Activated naive CD8-positive, alpha-beta T cell treated with anti-CD3 and anti-CD28 coated beads, Interleukin-2, amount 10 ng/mL, durations not matched to agents 7 days and 5 days (primary cell): ENCODE measurements at regions of chr6 and their contacts with region 1.

Region 1: GRCh38 chr6:30616811-30617564 is at the start of gene PPP1R10:
- DNase-seq: peak; percentile 97
- ATAC-seq: peak; percentile 73
- H3K4me3 Mint-ChIP-seq: peak within 1 kb of the TSS; percentile 95
- H3K27ac Mint-ChIP-seq: peak within 1 kb of the TSS; percentile 98
- H3K4me1 Mint-ChIP-seq: peaks cover 32% of the 10 kb centered on the region
- H3K27me3 Mint-ChIP-seq: no peaks in the 10 kb centered on the region
- total RNA-seq, gene PPP1R10: 140 to 151 TPM

Region 2: DNA sequence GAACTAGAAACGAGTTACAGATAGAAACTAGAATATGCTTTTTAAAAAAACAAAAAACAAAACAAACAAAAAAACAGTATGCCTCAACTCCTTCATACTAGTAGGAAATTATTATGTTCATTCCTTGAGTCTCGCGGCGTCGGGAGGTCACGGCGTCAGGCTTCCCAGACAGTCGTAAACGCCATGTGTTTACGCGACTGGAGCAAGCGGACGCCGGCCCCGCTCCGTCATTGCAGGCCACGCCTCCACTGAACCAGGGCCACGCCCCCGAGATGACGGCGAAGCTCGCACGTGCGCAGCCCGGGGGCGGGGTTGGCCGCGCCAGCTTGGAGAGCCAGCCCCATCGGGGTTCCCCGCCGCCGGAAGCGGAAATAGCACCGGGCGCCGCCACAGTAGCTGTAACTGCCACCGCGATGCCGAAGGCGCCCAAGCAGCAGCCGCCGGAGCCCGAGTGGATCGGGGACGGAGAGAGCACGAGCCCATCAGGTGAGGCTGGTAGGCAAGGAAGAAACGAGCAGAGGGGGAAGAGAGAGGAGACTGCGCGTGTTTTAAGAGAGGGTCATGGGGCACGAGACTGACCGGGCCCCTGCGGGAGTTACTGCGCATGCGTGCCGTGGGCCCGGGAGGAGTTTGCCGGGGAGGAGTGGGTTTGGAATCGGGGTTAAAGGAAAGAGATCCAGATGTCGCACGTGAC is 45.8 kb before region 1 on chr6 and contains the start of gene ABCF1:
- POLR2A ChIA-PET with region 1: interaction called, 29 read pairs
- DNase-seq: peak; percentile 100
- ATAC-seq: peak; percentile 91
- H3K4me3 Mint-ChIP-seq: peak within 1 kb of the TSS; percentile 98
- H3K27ac Mint-ChIP-seq: peak within 1 kb of the TSS; percentile 96
- H3K4me1 Mint-ChIP-seq: peaks cover 46% of the 10 kb centered on the region
- H3K27me3 Mint-ChIP-seq: peaks cover 2% of the 10 kb centered on the region
- total RNA-seq, gene ABCF1: 67.5 to 70.4 TPM

Region 3: GRCh38 chr6:30672445-30673253 is 55.7 kb after region 1 on chr6 and contains the start of gene DHX16:
- POLR2A ChIA-PET with region 1: interaction called, 15 read pairs
- DNase-seq: peak; percentile 89
- ATAC-seq: peak; percentile 83
- H3K4me3 Mint-ChIP-seq: peak within 1 kb of the TSS; percentile 78
- H3K27ac Mint-ChIP-seq: peak within 1 kb of the TSS; percentile 75
- H3K4me1 Mint-ChIP-seq: peaks cover 28% of the 10 kb centered on the region
- H3K27me3 Mint-ChIP-seq: no peaks in the 10 kb centered on the region
- total RNA-seq, gene DHX16: 42.9 to 44.2 TPM

Region 4: DNA sequence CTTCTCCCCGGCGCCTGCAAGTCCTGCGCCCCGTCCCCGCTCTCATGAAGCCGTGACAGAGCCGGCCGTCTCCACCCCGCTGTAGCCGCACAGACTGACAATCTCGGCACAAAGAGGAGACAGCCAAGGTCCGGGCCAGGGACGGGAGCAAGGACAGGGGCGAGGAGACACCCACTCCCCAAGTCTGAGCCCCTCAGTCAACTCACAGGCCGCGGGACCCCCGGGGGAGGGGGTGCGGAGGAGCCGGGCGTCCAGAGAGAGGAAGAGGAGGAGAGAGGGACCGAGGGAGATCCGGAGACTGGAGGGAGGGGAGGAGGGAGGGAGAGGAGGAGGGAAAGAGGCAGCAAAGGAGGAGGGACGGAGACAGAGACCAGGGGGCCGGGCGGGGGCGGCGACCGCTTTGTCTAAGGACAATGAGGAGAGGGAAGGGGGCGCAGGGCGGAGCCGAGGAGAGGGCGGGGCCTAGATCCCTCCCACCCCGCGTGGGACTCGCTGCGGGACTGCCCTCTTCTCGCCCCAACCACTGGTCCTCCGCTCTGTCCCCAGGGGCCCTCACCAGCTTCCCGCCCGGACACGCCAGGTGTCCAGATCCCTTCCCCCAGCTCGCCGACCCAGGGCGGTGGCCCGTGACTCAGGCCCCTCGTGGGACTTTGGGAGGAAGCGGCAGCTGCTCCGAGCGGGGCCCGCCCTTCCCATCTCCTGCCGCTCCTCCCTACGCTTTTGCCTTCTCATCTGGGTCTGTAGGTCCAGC is 70.1 kb after region 1 on chr6:
- POLR2A ChIA-PET with region 1: interaction called, 75 read pairs
- DNase-seq: peak; percentile 83
- ATAC-seq: peak; percentile 18
- H3K4me3 Mint-ChIP-seq: peak overlapping the region; percentile 91
- H3K27ac Mint-ChIP-seq: peak overlapping the region; percentile 99
- H3K4me1 Mint-ChIP-seq: peaks cover 36% of the 10 kb centered on the region
- H3K27me3 Mint-ChIP-seq: no peaks in the 10 kb centered on the region

Region 5: GRCh38 chr6:30700340-30700739 is 83.4 kb after region 1 on chr6:
- POLR2A ChIA-PET with region 1: no interaction called
- DNase-seq: no peak
- ATAC-seq: no peak
- H3K4me3 Mint-ChIP-seq: no peak overlapping the region
- H3K27ac Mint-ChIP-seq: no peak overlapping the region
- H3K4me1 Mint-ChIP-seq: no peaks in the 10 kb centered on the region
- H3K27me3 Mint-ChIP-seq: no peaks in the 10 kb centered on the region

Region 6: DNA sequence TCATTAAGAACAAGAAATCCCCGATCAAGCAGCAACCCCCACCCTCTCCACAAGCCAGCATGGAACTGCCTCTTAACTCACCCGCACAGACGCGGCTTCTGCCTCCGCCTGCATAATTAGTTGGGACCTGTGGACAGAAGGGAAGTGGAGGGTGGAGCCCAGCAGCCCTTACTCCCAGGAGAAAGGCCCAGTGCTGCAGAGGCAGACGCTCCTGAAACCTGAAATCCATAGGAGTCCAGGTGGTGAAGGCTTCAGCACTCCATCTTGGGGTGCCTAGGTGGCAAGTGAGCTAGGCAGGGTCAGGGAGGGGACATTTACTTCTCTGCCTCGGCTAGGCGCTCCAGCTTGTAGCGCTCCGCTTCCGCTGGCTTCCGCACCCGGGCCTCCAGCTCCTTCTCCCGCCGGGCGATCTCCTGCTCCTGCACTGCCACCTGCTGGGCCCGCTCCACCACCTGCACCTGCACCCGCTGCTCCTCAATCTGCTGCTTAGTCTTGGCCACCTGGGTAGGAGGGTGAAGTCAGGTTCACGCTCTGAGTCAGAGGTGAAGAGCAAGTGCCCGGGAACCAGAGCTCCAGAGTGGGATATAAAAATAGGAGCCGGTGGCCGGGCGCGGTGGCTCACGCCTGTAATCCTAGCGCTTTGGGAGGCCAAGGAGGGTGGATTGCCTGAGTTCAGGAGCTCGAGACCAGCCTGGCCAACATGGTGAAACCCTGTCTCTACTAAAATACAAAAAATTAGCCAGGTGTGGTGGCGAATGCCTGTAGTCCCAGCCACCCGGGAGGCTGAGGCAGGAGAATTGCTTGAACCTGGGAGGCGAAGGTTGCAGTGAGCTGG is 113.8 kb after region 1 on chr6:
- POLR2A ChIA-PET with region 1: interaction called, 11 read pairs
- DNase-seq: peak; percentile 87
- ATAC-seq: peak; percentile 90
- H3K4me3 Mint-ChIP-seq: peak overlapping the region; percentile 54
- H3K27ac Mint-ChIP-seq: peak overlapping the region; percentile 70
- H3K4me1 Mint-ChIP-seq: peaks cover 43% of the 10 kb centered on the region
- H3K27me3 Mint-ChIP-seq: no peaks in the 10 kb centered on the region